Activated B cell treated with CpG ODN at 0.5 μM for 24 hours (primary cell): ENCODE measurements at regions of chr7 and their contacts with region 1.

Region 1: DNA sequence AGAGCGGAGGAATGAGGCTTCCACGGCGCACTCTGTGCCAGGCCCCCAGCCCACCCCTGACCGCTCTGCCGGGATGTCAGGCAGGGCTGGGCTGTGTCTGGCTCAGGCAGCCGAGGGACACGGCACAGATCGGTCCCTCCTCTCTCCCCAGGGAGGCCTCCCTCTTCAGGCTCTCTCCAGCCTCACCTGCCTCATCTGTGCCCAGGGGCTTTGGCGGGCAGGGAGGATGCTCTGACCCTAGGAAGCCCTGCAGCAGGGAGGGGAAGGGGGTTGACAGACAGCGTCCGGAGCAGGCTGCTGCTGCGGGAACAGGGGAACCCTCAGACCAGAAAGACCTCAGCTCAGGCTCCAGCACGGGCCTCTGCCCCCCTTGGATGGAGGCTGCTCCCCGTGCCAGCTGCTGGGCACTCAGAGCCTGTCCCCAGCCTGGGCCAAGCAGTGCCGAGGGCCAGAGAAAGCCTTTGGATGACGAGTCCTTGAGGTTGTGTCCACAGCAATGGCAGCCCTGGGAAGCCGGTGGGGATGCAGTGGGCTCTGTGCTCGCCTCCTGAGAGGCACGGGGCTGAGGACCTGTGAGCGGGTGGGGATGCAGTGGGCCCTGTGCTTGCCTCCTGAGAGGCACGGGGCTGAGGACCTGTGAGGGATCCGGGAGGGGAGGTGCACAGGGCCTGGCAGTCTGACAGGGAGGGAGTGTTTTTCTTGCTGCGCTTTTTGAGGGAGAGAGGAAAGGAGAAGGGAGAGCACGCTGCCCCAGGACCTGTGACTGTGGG is 66.9 kb downstream of the FOXL3 start:
- DNase-seq: no peak
- ATAC-seq: no peak
- H3K4me3 Mint-ChIP-seq: no peak overlapping the region
- H3K27ac Mint-ChIP-seq: no peak overlapping the region
- H3K4me1 Mint-ChIP-seq: peaks cover 16% of the 10 kb centered on the region
- H3K27me3 Mint-ChIP-seq: peaks cover 20% of the 10 kb centered on the region
- CTCF ChIP-seq: no peak

Region 2: GRCh38 chr7:405489-406211 is 48.8 kb after region 1 on chr7:
- CTCF ChIA-PET with region 1: no interaction called
- POLR2A ChIA-PET with region 1: no interaction called
- intact Hi-C with region 1: no loop called
- DNase-seq: no peak
- ATAC-seq: no peak
- H3K4me3 Mint-ChIP-seq: no peak overlapping the region
- H3K27ac Mint-ChIP-seq: no peak overlapping the region
- H3K4me1 Mint-ChIP-seq: no peaks in the 10 kb centered on the region
- H3K27me3 Mint-ChIP-seq: peaks cover 7% of the 10 kb centered on the region
- CTCF ChIP-seq: no peak

Region 3: GRCh38 chr7:471866-472639 is 115.2 kb after region 1 on chr7:
- CTCF ChIA-PET with region 1: no interaction called
- POLR2A ChIA-PET with region 1: no interaction called
- intact Hi-C with region 1: no loop called
- DNase-seq: no peak
- ATAC-seq: no peak
- H3K4me3 Mint-ChIP-seq: no peak overlapping the region
- H3K27ac Mint-ChIP-seq: no peak overlapping the region
- H3K4me1 Mint-ChIP-seq: peaks cover 8% of the 10 kb centered on the region
- H3K27me3 Mint-ChIP-seq: peaks cover 7% of the 10 kb centered on the region
- CTCF ChIP-seq: no peak

Region 4: DNA sequence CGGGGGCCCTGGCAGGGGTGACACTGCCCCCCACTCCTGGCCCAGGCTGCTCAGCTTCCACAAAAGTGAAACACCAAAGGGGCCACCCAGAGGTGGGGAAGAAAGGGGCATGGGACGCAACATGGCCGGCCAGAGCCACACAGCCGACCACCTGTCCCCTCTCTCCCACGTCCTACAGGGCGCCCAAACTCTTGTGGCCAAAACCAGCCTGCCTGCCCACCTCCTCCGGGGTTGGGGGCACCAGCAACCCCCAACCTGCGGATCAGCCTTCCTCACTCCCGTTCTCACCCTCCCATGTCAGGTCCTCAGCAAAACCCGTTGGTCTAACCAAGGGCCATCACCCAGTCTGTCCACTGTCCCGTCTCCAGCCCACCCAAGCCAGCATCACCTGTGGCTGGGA is 290.1 kb after region 1 on chr7:
- CTCF ChIA-PET with region 1: no interaction called
- POLR2A ChIA-PET with region 1: interaction called, 11 read pairs
- intact Hi-C with region 1: no loop called
- DNase-seq: no peak
- ATAC-seq: no peak
- H3K4me3 Mint-ChIP-seq: no peak overlapping the region
- H3K27ac Mint-ChIP-seq: no peak overlapping the region
- H3K4me1 Mint-ChIP-seq: no peaks in the 10 kb centered on the region
- H3K27me3 Mint-ChIP-seq: no peaks in the 10 kb centered on the region
- CTCF ChIP-seq: no peak